ENCODE measurements at regions of chr16 and their contacts with region 1.

Region 1: GRCh38 chr16:31441956-31442355 is 633 bp downstream of the ZNF843 start:
- DNase-seq: no peak
- H3K4me3 ChIP-seq: no peak overlapping the region
- H3K4me3 Mint-ChIP-seq: peak overlapping the region; percentile 75 to 91 (median 84)
- H3K27ac ChIP-seq: no peak overlapping the region
- H3K27ac Mint-ChIP-seq: peak overlapping the region in 2 of 7 donors; percentile 3 to 73
- H3K4me1 ChIP-seq: no peaks in the 10 kb centered on the region
- H3K4me1 Mint-ChIP-seq: peaks cover 1 to 9% (median 6%) of the 10 kb centered on the region in 4 donors
- H3K27me3 ChIP-seq: no peaks in the 10 kb centered on the region
- H3K27me3 Mint-ChIP-seq: peaks cover 0 to 1% of the 10 kb centered on the region in 2 donors

Region 2: GRCh38 chr16:30984669-30985400 is 457.1 kb before region 1 on chr16 and contains the start of gene HSD3B7:
- CTCF ChIA-PET with region 1: interaction called, 49 read pairs
- POLR2A ChIA-PET with region 1: no interaction called
- intact Hi-C with region 1: no loop called
- DNase-seq: peak; percentile 60 to 76 (median 65)
- H3K4me3 ChIP-seq: no peak within 1 kb of the TSS
- H3K4me3 Mint-ChIP-seq: no peak within 1 kb of the TSS
- H3K27ac ChIP-seq: no peak within 1 kb of the TSS
- H3K27ac Mint-ChIP-seq: peak within 1 kb of the TSS in 2 of 7 donors; percentile 63 to 66
- H3K4me1 ChIP-seq: peaks cover 6% of the 10 kb centered on the region
- H3K4me1 Mint-ChIP-seq: peaks cover 0 to 6% (median 0%) of the 10 kb centered on the region in 4 donors
- H3K27me3 ChIP-seq: no peaks in the 10 kb centered on the region
- H3K27me3 Mint-ChIP-seq: no peaks in the 10 kb centered on the region
- total RNA-seq, gene HSD3B7: 3.6 to 4.3 TPM

Region 3: DNA sequence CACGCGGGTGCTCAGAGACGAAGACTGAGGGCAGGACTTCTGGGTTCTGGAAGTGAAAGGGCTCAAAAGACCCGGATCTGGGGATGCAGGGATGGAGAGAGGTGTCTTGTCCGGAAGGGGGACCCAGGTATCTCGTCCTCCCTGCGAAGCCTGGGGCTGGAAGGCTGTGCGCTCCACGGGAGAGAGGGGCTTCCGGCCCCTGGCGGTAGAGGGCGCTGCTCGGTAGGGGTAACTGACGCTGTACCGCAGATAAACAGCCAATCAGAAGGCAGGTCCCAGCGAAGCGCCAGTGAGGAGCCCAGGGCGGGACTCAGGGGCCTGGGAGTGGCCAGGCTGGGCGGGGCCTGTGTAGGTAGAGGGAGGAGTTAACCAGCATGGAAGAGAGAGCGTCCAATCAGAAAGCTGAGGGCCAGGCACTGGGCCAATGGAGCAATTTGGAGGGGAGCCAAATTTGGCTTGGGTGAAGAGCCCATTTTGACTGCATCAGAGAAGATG is 30.8 kb after region 1 on chr16:
- CTCF ChIA-PET with region 1: no interaction called
- POLR2A ChIA-PET with region 1: no interaction called
- intact Hi-C with region 1: no loop called
- DNase-seq: peak in 3 of 5 donors; percentile 21 to 27 (median 25)
- H3K4me3 ChIP-seq: peak overlapping the region in 1 of 2 donors; percentile 27
- H3K4me3 Mint-ChIP-seq: peak overlapping the region; percentile 56 to 90 (median 76)
- H3K27ac ChIP-seq: no peak overlapping the region
- H3K27ac Mint-ChIP-seq: peak overlapping the region in 1 of 7 donors; percentile 42
- H3K4me1 ChIP-seq: peaks cover 34% of the 10 kb centered on the region
- H3K4me1 Mint-ChIP-seq: peaks cover 10 to 32% (median 27%) of the 10 kb centered on the region in 4 donors
- H3K27me3 ChIP-seq: no peaks in the 10 kb centered on the region
- H3K27me3 Mint-ChIP-seq: peaks cover 0 to 13% of the 10 kb centered on the region in 2 donors

Region 4: DNA sequence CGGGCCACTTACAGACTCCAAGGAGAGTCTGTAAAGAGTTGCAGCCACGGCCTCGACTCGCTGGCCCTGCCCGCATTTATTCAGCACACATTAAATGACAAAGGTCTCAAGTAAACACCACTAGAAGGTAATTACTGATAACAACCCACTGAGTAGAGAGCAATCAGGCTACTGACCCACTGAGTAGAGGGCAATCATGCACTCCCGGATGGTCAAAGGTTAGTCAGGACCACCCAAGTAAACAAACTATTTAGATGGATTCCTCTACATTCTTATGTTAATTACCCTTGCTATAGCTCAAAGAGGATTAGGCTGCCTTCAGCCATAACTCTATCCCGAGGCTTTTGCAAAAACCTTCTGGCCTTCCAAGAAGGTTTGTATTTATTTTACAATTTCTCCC is 400.9 kb after region 1 on chr16:
- CTCF ChIA-PET with region 1: no interaction called
- POLR2A ChIA-PET with region 1: no interaction called
- intact Hi-C with region 1: no loop called
- DNase-seq: no peak
- H3K4me3 ChIP-seq: no peak overlapping the region
- H3K4me3 Mint-ChIP-seq: no peak overlapping the region
- H3K27ac ChIP-seq: no peak overlapping the region
- H3K27ac Mint-ChIP-seq: no peak overlapping the region
- H3K4me1 ChIP-seq: no peaks in the 10 kb centered on the region
- H3K4me1 Mint-ChIP-seq: peaks cover 0 to 1% (median 0%) of the 10 kb centered on the region in 4 donors
- H3K27me3 ChIP-seq: no peaks in the 10 kb centered on the region
- H3K27me3 Mint-ChIP-seq: peaks cover 0 to 11% of the 10 kb centered on the region in 2 donors

Measured in CD4-positive, alpha-beta memory T cell (primary cell).